ENCODE measurements at regions of chr11 and their contacts with region 1.

Region 1: DNA sequence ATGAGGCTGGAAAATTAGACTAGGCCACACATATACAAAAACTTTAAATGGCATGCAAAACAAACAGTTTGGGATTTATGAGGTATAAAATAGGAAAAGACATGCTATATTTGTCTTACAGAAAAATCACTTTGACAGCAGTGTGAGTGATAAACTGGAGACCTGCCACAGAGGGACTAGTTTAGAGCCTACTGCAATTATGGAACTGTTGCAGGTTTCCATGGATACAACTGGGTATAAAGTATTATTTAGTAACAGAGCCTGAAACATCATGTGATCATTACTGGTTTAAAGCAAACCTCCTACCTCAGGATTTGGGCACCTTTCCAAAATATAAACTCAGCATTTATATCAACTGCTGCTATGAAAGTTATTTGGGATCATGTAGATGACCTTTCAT is 1032.5 kb downstream of the DLG2 start:
- DNase-seq: no peak
- H3K4me3 ChIP-seq: no peak overlapping the region
- H3K27ac ChIP-seq: no peak overlapping the region
- H3K4me1 ChIP-seq: no peaks in the 10 kb centered on the region
- H3K27me3 ChIP-seq: no peaks in the 10 kb centered on the region
- CTCF ChIP-seq: no peak

Region 2: DNA sequence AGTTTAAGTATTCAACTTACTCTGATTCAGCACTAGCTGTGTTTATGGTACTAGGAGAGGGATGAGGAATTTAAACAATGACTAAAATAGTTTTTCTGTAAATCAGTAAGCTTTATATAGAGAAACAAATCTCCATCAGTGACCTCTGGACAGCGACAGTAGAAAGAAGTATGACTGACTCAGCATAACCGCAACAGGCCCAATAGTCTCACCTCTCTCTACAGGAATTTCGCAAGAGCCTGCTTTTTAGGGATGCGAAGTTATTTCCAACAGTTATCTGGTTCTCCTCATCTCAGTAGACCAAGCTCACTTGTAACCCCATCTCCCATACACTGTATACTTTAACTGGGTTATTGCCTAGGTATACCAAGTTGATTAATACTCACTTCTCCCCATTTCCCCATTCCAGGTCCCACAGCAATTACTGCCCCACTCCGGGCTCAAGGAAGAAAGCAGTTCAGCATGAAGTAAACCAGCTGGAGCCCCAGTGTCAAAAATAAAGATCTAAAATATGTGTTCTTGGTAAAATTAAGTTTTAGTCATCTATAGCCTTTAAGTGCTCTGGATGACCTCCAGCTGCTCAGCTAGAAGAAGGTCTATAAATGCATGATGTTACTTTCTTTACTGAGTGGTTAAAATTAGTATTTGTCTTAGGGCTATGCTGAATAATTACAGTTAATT is 537.8 kb before region 1 on chr11:
- CTCF ChIA-PET with region 1: no interaction called
- POLR2A ChIA-PET with region 1: no interaction called
- intact Hi-C with region 1: no loop called
- DNase-seq: no peak
- H3K4me3 ChIP-seq: no peak overlapping the region
- H3K27ac ChIP-seq: no peak overlapping the region
- H3K4me1 ChIP-seq: no peaks in the 10 kb centered on the region
- H3K27me3 ChIP-seq: no peaks in the 10 kb centered on the region
- CTCF ChIP-seq: no peak

Region 3: GRCh38 chr11:84558085-84558905 is 36.3 kb before region 1 on chr11:
- CTCF ChIA-PET with region 1: no interaction called
- POLR2A ChIA-PET with region 1: no interaction called
- intact Hi-C with region 1: no loop called
- DNase-seq: peak; percentile 68
- H3K4me3 ChIP-seq: no peak overlapping the region
- H3K27ac ChIP-seq: no peak overlapping the region
- H3K4me1 ChIP-seq: no peaks in the 10 kb centered on the region
- H3K27me3 ChIP-seq: no peaks in the 10 kb centered on the region
- CTCF ChIP-seq: peak; percentile 93

Region 4: GRCh38 chr11:84607975-84608836 is 13.6 kb after region 1 on chr11:
- CTCF ChIA-PET with region 1: no interaction called
- POLR2A ChIA-PET with region 1: interaction called, 11 read pairs
- intact Hi-C with region 1: no loop called
- DNase-seq: no peak
- H3K4me3 ChIP-seq: no peak overlapping the region
- H3K27ac ChIP-seq: no peak overlapping the region
- H3K4me1 ChIP-seq: no peaks in the 10 kb centered on the region
- H3K27me3 ChIP-seq: no peaks in the 10 kb centered on the region
- CTCF ChIP-seq: no peak

Measured in A673 (cell line).